Activated CD4-positive, alpha-beta T cell treated with anti-CD3 and anti-CD28 coated beads for 36 hours (primary cell): ENCODE measurements at regions of chr3 and their contacts with region 1.

Region 1: GRCh38 chr3:69671082-69671952 is 67.9 kb upstream of the MITF start:
- DNase-seq: peak; percentile 11
- ATAC-seq: no peak
- H3K4me3 Mint-ChIP-seq: no peak overlapping the region
- H3K27ac Mint-ChIP-seq: no peak overlapping the region
- H3K4me1 Mint-ChIP-seq: no peaks in the 10 kb centered on the region
- H3K27me3 Mint-ChIP-seq: no peaks in the 10 kb centered on the region

Region 2: DNA sequence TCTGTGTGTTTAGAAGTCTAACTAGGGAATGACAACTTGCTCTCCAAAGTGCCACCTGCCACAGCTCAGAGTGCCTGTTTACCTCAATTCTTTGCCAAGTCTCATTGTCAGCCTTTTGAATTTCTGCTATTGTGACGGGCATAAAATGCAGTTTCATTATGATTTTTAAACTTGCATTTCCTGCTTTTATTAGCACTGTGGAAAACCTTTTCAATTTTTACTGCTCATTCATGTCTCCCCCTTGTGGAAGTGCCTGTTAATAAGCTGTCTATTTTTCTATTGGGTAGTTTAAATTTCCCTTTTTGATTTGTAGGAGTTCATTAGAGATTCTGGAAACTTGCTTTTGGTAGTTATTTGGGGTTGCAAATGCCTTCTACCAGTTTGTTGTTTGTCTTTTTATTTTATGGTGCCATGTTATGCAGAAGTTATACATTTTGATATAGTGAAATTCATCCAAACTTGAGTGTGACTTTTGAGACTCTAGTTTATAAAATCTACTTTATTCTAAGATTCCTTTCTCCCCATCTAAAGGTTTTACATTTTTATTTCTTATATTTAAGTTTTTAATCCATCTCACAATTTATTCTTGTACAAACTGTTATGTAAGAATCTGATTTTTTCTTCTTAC is 231.6 kb before region 1 on chr3:
- CTCF ChIA-PET with region 1: no interaction called
- POLR2A ChIA-PET with region 1: no interaction called
- intact Hi-C with region 1: loop called in 1 of 2 experiments (anchors 10 kb)
- DNase-seq: no peak
- ATAC-seq: no peak
- H3K4me3 Mint-ChIP-seq: no peak overlapping the region
- H3K27ac Mint-ChIP-seq: no peak overlapping the region
- H3K4me1 Mint-ChIP-seq: peaks cover 34% of the 10 kb centered on the region
- H3K27me3 Mint-ChIP-seq: no peaks in the 10 kb centered on the region

Region 3: GRCh38 chr3:70249509-70250160 is 578.3 kb after region 1 on chr3:
- CTCF ChIA-PET with region 1: no interaction called
- POLR2A ChIA-PET with region 1: no interaction called
- intact Hi-C with region 1: no loop called
- DNase-seq: no peak
- ATAC-seq: no peak
- H3K4me3 Mint-ChIP-seq: no peak overlapping the region
- H3K27ac Mint-ChIP-seq: no peak overlapping the region
- H3K4me1 Mint-ChIP-seq: no peaks in the 10 kb centered on the region
- H3K27me3 Mint-ChIP-seq: peaks cover 6% of the 10 kb centered on the region